ENCODE measurements at regions of chr2 and their contacts with region 1.

Region 1: DNA sequence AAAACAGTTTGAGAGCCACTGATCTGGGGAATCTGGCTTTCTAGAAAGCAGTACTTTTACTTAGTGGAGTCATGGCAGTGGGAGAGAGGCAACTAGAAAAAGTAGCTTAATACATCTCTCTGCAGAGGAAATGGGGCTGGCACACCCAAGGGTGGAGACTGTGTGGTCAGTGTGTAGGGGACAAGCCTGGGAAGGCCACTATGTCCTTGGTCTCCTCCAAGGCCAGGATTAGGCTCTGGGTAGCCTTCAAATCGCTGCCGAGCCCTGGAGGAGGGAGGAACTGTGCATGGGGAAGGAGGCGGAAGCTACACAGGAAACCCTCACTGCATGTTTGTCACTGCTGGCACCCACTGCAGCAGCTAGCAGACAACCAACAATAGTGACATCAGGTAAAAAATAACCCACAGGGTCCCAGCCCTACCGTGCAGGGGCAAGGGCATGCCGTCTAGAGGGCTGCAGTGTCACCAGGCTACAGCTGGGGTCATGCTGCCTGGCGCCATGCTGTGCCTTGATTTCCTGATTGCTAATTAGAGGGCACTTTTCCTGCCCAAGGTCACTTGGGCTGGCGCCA is 34.8 kb downstream of the LBH start:
- DNase-seq: peak; percentile 25 to 80 (median 75)
- ATAC-seq: peak; percentile 95
- H3K4me3 ChIP-seq: peak overlapping the region; percentile 44
- H3K4me3 Mint-ChIP-seq: peak overlapping the region; percentile 68 to 92 (median 84)
- H3K27ac ChIP-seq: peak overlapping the region; percentile 82
- H3K27ac Mint-ChIP-seq: peak overlapping the region; percentile 89 to 100 (median 97)
- H3K4me1 ChIP-seq: peaks cover 46 to 65% of the 10 kb centered on the region in 2 donors
- H3K4me1 Mint-ChIP-seq: peaks cover 44 to 94% (median 86%) of the 10 kb centered on the region in 7 donors
- H3K27me3 ChIP-seq: no peaks in the 10 kb centered on the region
- H3K27me3 Mint-ChIP-seq: no peaks in the 10 kb centered on the region

Region 2: GRCh38 chr2:30208452-30208851 is 57.7 kb before region 1 on chr2:
- CTCF ChIA-PET with region 1: interaction called, 8 read pairs
- POLR2A ChIA-PET with region 1: interaction called, 7 read pairs
- intact Hi-C with region 1: loop called in 1 of 2 experiments (anchors 1 kb)
- DNase-seq: peak in 4 of 9 donors; percentile 19 to 42 (median 28)
- ATAC-seq: peak; percentile 69
- H3K4me3 ChIP-seq: peak overlapping the region; percentile 3
- H3K4me3 Mint-ChIP-seq: peak overlapping the region; percentile 14 to 80 (median 68)
- H3K27ac ChIP-seq: peak overlapping the region; percentile 25
- H3K27ac Mint-ChIP-seq: peak overlapping the region in 8 of 9 donors; percentile 82 to 95 (median 88)
- H3K4me1 ChIP-seq: peaks cover 8 to 33% of the 10 kb centered on the region in 2 donors
- H3K4me1 Mint-ChIP-seq: peaks cover 14 to 44% (median 35%) of the 10 kb centered on the region in 7 donors
- H3K27me3 ChIP-seq: no peaks in the 10 kb centered on the region
- H3K27me3 Mint-ChIP-seq: peaks cover 0 to 7% (median 0%) of the 10 kb centered on the region in 5 donors

Region 3: GRCh38 chr2:30239308-30239985 is 26.7 kb before region 1 on chr2:
- CTCF ChIA-PET with region 1: interaction called, 17 read pairs
- POLR2A ChIA-PET with region 1: interaction called, 901 read pairs
- intact Hi-C with region 1: loop called in 1 of 2 experiments (anchors 1 kb)
- DNase-seq: peak; percentile 55 to 79 (median 74)
- ATAC-seq: peak; percentile 88
- H3K4me3 ChIP-seq: peak overlapping the region; percentile 45
- H3K4me3 Mint-ChIP-seq: peak overlapping the region; percentile 65 to 98 (median 92)
- H3K27ac ChIP-seq: peak overlapping the region; percentile 97
- H3K27ac Mint-ChIP-seq: peak overlapping the region; percentile 61 to 100 (median 90)
- H3K4me1 ChIP-seq: peaks cover 75 to 87% of the 10 kb centered on the region in 2 donors
- H3K4me1 Mint-ChIP-seq: peaks cover 68 to 97% (median 89%) of the 10 kb centered on the region in 7 donors
- H3K27me3 ChIP-seq: no peaks in the 10 kb centered on the region
- H3K27me3 Mint-ChIP-seq: no peaks in the 10 kb centered on the region

Region 4: DNA sequence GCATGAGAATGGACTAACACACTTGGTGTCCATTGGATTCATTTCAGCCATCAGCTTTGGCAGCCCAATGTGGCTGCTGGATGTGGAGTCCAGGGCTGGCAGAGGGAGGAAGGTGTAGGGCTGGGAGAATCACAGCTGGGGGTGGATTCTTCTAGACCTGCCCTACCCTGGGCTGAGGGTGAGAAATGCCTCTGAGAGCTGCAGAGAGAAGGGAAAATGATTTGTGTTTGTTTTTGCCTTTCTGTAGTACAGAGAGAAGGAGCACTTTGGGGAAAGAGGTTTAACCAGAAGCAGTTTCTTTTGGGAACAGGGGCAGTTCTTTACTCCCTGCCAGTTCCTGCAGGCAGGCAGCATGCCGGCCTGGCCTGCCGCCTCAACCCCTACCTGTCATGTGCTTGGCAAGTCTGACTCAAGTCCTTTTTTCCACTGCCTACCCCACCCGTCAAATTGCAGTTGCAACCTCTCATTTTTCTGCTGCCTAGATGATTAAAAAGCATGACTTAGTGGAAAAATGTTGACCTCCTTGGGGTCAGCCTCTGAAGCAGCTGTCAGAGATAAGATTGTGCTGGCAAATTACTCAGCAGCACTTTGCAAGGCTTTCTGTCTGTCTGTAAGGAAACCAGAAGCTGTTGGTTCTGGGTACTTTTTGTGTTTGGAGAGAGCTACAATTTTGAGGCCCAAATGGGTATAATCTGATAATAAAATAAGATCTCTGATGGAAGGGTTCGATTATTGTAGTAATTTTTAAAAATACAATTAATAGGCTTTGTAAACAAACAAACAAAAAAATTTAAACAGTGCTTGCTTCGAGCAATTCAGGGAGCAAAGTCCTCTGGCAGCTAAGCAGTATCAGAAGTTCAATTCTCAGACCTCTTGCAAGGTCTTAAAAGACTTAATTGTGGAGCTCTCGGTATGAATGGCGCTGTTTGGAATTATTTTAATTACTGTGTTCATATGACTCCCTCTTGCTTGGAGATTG is 13.1 kb before region 1 on chr2:
- CTCF ChIA-PET with region 1: interaction called, 4 read pairs
- POLR2A ChIA-PET with region 1: interaction called, 901 read pairs
- intact Hi-C with region 1: loop called (anchors 1 to 2 kb)
- DNase-seq: peak in 4 of 9 donors; percentile 38 to 83 (median 53)
- ATAC-seq: peak; percentile 36
- H3K4me3 ChIP-seq: no peak overlapping the region
- H3K4me3 Mint-ChIP-seq: peak overlapping the region; percentile 53 to 79 (median 72)
- H3K27ac ChIP-seq: peak overlapping the region; percentile 86
- H3K27ac Mint-ChIP-seq: peak overlapping the region; percentile 72 to 100 (median 97)
- H3K4me1 ChIP-seq: peaks cover 77 to 93% of the 10 kb centered on the region in 2 donors
- H3K4me1 Mint-ChIP-seq: peaks cover 65 to 99% (median 97%) of the 10 kb centered on the region in 7 donors
- H3K27me3 ChIP-seq: no peaks in the 10 kb centered on the region
- H3K27me3 Mint-ChIP-seq: no peaks in the 10 kb centered on the region

Region 5: DNA sequence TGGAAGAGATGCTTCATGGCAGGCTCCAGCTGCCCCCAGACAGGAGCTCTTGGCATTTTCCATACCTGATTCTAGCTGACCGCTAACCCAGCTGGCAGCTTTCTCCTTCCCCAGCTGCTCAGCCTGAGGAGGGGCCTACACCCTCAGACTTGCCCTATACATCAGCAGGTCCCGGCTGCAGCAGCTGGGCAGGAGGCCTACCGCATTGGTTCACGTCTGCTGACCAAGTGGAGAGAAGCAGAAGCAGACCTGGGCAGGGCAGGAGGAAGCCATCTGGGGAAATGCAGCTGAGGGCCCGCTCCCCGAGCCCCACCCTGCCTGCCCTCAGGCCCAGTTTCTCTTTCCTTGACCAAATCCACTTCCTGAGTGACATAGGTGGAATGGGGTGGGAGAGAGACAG is 15.9 kb after region 1 on chr2:
- CTCF ChIA-PET with region 1: interaction called, 3 read pairs
- POLR2A ChIA-PET with region 1: interaction called, 10 read pairs
- intact Hi-C with region 1: loop called in 1 of 2 experiments (anchors 2 kb)
- DNase-seq: no peak
- ATAC-seq: peak; percentile 59
- H3K4me3 ChIP-seq: no peak overlapping the region
- H3K4me3 Mint-ChIP-seq: no peak overlapping the region
- H3K27ac ChIP-seq: no peak overlapping the region
- H3K27ac Mint-ChIP-seq: no peak overlapping the region
- H3K4me1 ChIP-seq: peaks cover 0 to 2% of the 10 kb centered on the region in 2 donors
- H3K4me1 Mint-ChIP-seq: peaks cover 15 to 54% (median 37%) of the 10 kb centered on the region in 7 donors
- H3K27me3 ChIP-seq: no peaks in the 10 kb centered on the region
- H3K27me3 Mint-ChIP-seq: no peaks in the 10 kb centered on the region

Region 6: DNA sequence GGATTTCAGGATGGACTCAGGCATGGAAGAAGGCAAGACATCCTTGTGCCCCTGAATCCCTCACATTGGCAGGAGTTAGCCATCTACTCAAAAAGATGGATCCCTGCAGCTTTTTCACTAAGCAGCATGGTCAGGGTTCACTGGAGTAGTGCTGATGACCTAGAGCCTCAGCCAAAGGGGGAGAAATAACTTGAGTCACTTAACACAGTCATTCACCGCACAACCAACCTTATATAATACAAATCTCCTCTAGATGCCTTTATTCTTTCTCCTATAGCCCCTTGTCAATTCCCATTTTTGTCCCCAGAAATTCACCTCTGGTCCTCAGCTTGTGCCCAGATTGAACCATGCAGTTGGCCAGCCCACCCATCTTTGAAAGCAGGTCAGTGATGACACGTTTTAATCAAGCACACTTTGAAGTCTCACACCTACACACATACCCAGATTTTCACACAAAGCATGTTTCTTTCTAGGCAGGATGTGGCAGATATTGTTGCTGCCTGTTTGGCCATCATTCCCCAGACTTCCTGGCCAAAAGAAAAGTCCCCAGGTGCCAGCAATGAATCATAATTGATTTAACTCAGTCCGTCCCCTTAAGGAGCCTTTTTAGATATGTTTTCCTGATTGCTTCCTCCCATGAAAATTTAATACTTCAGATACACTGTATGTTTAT is 49.4 kb after region 1 on chr2:
- CTCF ChIA-PET with region 1: no interaction called
- POLR2A ChIA-PET with region 1: interaction called, 4 read pairs
- intact Hi-C with region 1: loop called in 1 of 2 experiments (anchors 2 kb)
- DNase-seq: peak in 6 of 9 donors; percentile 22 to 51 (median 43)
- ATAC-seq: peak; percentile 81
- H3K4me3 ChIP-seq: no peak overlapping the region
- H3K4me3 Mint-ChIP-seq: peak overlapping the region; percentile 24 to 81 (median 71)
- H3K27ac ChIP-seq: peak overlapping the region; percentile 24
- H3K27ac Mint-ChIP-seq: peak overlapping the region; percentile 75 to 97 (median 91)
- H3K4me1 ChIP-seq: peaks cover 15 to 40% of the 10 kb centered on the region in 2 donors
- H3K4me1 Mint-ChIP-seq: peaks cover 35 to 65% (median 61%) of the 10 kb centered on the region in 7 donors
- H3K27me3 ChIP-seq: no peaks in the 10 kb centered on the region
- H3K27me3 Mint-ChIP-seq: no peaks in the 10 kb centered on the region

Region 7: GRCh38 chr2:30421604-30422443 is 155.7 kb after region 1 on chr2:
- CTCF ChIA-PET with region 1: interaction called, 3 read pairs
- POLR2A ChIA-PET with region 1: interaction called, 5 read pairs
- intact Hi-C with region 1: loop called in 1 of 2 experiments (anchors 2 kb)
- DNase-seq: peak in 5 of 9 donors; percentile 24 to 68 (median 44)
- ATAC-seq: peak; percentile 10
- H3K4me3 ChIP-seq: peak overlapping the region; percentile 32
- H3K4me3 Mint-ChIP-seq: peak overlapping the region; percentile 41 to 76 (median 70)
- H3K27ac ChIP-seq: peak overlapping the region; percentile 70
- H3K27ac Mint-ChIP-seq: peak overlapping the region; percentile 91 to 98 (median 93)
- H3K4me1 ChIP-seq: peaks cover 24 to 48% of the 10 kb centered on the region in 2 donors
- H3K4me1 Mint-ChIP-seq: peaks cover 35 to 64% (median 54%) of the 10 kb centered on the region in 7 donors
- H3K27me3 ChIP-seq: no peaks in the 10 kb centered on the region
- H3K27me3 Mint-ChIP-seq: no peaks in the 10 kb centered on the region

Measured in naive thymus-derived CD4-positive, alpha-beta T cell (primary cell).